ENCODE measurements at regions of chr16 and their contacts with region 1.

Region 1: GRCh38 chr16:8868416-8869211 is at the start of gene CARHSP1:
- DNase-seq: peak; percentile 94
- ATAC-seq: peak; percentile 96
- H3K4me3 ChIP-seq: peak within 1 kb of the TSS; percentile 90
- H3K27ac ChIP-seq: peak within 1 kb of the TSS; percentile 89
- H3K4me1 ChIP-seq: peaks cover 31% of the 10 kb centered on the region
- H3K27me3 ChIP-seq: no peaks in the 10 kb centered on the region
- CTCF ChIP-seq: no peak
- total RNA-seq, gene CARHSP1: 103 TPM

Region 2: GRCh38 chr16:8806272-8806983 is 62.2 kb before region 1 on chr16:
- intact Hi-C with region 1: loop called (anchors 10 kb)
- DNase-seq: no peak
- ATAC-seq: no peak
- H3K4me3 ChIP-seq: no peak overlapping the region
- H3K27ac ChIP-seq: no peak overlapping the region
- H3K4me1 ChIP-seq: no peaks in the 10 kb centered on the region
- H3K27me3 ChIP-seq: no peaks in the 10 kb centered on the region
- CTCF ChIP-seq: no peak

Region 3: DNA sequence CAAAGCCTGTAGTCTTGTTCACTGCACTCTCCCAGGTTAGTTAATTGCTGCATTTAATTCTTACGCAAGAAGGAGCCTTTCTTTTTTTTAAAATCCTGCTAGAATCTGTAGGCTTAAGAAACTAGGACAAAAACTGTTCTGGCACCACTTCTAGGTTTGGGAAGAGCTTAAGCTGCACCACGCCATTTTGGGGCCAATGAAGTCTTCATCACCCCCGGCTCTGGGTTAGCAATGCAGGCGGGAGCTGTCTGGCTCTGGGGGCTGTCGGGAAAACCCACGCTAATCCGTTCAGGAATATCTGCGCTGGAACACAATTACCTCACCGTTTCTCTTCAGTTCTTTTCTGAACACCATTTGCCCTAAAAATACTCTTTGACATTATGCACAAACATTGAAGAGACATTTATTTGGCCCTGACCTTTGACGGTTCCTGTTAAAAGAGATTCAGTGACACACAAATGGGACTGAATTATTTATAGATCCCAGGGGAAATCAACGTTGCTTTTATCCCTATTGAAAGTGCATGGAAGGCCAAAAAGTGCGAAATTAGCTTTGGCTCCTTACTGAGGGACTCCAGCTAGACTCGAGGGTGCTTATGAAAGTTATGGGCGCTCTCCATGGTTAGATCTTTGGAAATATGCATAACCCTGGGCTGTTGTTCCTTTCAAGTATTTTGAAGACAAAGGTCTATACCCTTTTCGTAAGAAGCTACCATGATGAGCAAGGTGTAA is 472.1 kb after region 1 on chr16:
- intact Hi-C with region 1: no loop called
- DNase-seq: no peak
- ATAC-seq: no peak
- H3K4me3 ChIP-seq: no peak overlapping the region
- H3K27ac ChIP-seq: no peak overlapping the region
- H3K4me1 ChIP-seq: no peaks in the 10 kb centered on the region
- H3K27me3 ChIP-seq: no peaks in the 10 kb centered on the region
- CTCF ChIP-seq: no peak